AG04450 (cell line): ENCODE measurements at regions of chr1 and their contacts with region 1.

Region 1: DNA sequence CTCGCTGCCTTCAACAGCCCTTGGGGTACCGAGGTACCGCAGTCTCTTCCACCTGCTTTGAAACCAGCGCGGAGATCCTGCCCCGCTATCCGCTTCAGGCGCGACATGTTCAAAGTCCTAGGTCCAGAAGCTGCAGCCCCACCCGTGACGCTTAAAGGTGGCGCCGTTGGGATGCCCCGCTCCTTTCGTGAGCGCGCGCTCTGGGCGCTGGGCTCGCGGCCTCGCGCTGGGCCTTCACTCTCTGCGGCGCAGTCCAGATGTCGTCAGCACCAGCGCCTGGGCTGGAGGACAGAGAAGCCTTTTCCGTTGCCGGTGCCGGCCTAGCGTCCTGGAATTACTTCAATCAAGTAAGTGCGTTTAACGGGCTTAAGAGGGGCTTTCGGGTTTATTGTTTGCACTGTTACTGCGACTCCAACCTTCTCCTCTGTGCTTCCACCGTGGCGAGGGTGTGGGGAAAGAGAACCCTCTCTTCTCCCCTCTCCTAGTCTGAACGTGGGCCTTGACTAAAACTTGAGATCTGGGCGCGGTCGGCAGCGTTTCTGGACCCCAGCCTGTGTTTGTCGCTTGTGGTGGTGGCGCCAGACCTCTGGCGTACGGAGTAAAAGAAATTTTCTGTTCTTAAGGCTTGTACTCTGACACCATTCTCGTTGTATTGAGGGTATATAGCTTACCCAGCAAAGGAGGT is at the start of gene LRRC40:
- DNase-seq: peak; percentile 79
- H3K4me3 ChIP-seq: peak within 1 kb of the TSS; percentile 96
- H3K27ac ChIP-seq: peak within 1 kb of the TSS; percentile 83
- H3K27me3 ChIP-seq: no peaks in the 10 kb centered on the region
- CTCF ChIP-seq: no peak
- polyA plus RNA-seq, gene LRRC40: 13.9 and 20.6 TPM in 2 replicates

Region 2: DNA sequence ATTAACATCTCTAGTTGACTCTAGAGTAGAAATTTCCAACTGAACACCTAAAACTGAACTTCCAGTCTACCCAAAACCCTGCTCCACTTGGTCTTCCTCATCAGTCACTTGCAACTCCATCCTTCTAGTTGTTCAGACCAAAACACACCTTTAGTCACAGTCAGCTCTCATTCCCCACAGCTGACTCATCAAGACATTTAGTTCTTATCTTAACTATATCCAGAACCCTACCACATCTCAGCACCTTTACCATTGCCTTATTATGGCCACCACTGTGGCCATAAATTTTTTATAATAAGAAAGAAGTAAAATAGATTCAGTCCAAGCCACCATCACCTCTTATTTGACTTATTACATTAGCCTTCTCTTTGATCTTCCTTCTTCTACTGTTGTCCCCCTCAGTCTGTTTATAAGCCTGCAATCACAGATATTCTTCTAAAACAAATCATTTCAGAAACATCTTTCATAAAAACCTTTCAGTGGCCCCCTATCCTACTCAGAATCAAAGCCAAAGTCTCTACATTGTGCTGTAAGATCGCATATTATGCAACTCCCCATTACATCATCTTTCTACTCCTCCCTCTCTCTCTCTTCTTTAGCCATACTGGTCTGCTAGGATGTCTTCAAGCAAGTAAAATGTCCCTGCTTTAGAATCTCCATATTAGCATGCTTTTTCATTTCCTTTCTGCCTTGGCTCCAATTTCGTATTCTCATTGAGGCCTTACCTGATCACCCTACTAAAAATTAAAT is 276.1 kb before region 1 on chr1:
- CTCF ChIA-PET with region 1: no interaction called
- POLR2A ChIA-PET with region 1: no interaction called
- DNase-seq: no peak
- H3K4me3 ChIP-seq: no peak overlapping the region
- H3K27ac ChIP-seq: no peak overlapping the region
- H3K27me3 ChIP-seq: no peaks in the 10 kb centered on the region
- CTCF ChIP-seq: no peak

Region 3: DNA sequence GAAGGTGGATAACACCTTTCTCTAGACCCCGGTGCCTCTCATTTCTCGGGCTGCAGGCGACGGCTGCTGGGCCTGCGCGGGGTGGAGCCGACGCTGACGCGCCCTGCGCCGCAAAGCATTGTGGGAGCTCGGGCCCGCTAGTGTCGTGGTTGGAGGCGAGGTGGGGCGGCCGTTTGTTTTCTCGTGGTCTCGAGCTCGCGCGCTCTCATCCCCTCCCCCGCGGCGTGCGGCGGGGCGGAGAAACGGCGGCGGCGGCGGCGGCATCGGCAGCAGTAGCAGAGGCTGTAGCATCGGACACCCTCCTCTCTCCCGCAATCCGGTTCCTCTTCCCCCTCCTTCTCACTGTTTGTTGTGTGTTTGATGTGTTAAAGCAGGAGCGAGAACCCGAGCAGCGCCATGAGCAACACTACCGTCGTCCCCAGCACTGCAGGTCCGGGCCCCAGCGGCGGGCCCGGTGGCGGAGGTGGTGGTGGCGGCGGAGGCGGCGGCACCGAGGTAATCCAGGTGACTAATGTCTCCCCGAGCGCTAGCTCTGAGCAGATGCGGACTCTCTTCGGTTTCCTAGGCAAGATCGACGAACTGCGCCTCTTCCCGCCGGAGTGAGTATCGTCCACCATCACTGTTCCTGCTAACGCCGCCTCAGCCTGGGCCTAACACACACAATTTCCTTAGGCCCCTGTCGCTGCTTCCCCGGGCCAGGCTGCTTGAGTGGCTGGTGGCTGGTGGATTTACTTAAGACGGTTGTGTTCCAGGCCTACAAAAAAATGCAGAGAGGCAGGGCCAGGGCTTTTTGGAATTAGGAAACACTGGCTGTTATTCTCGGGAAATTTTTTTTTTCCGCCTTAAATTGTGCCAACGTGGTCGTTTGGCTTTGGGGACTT is 15.9 kb after region 1 on chr1 and contains the start of gene SRSF11:
- CTCF ChIA-PET with region 1: no interaction called
- POLR2A ChIA-PET with region 1: interaction called, 11 read pairs
- DNase-seq: peak; percentile 78
- H3K4me3 ChIP-seq: peak within 1 kb of the TSS; percentile 75
- H3K27ac ChIP-seq: peak within 1 kb of the TSS; percentile 88
- H3K27me3 ChIP-seq: no peaks in the 10 kb centered on the region
- CTCF ChIP-seq: peak; percentile 9; the same call in 1 of the 2 replicates
- polyA plus RNA-seq, gene SRSF11: 230 and 287 TPM in 2 replicates